ENCODE measurements at regions of chr14 and their contacts with region 1.

Region 1: GRCh38 chr14:36647824-36648753 is 13.6 kb upstream of the PAX9 start:
- DNase-seq: peak; percentile 47 to 69
- ATAC-seq: peak; percentile 95 to 98
- H3K4me3 ChIP-seq: peak overlapping the region; percentile 51
- H3K27ac ChIP-seq: peak overlapping the region; percentile 60 to 81
- H3K4me1 ChIP-seq: peaks cover 5% of the 10 kb centered on the region; the same call in 2 of the 3 replicates
- CTCF ChIP-seq: peak; percentile 73
- EP300 ChIP-seq: no peak
- POLR2A ChIP-seq: no peak
- RAD21 ChIP-seq: peak; percentile 76 to 85

Region 2: DNA sequence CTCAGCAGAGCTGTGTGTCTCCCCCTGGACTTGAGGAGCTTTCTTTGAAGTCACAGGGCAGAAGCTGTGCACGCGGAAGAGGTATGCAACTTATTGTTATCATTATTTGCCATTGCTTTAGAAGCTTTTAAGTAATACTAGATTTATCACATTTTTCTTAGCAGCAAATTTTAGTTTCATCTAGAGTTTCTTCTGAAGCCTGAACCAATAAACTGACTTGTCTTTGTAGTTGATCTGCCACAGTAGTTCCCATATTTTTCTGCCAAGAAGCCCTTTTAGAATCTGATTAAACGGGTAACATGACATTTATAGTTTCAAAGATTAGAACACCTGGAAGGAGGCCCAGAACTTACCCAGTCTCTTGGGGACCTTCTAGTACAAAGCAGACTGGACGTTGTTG is 13.8 kb before region 1 on chr14:
- CTCF ChIA-PET with region 1: interaction called, 13 read pairs
- POLR2A ChIA-PET with region 1: no interaction called
- DNase-seq: no peak
- ATAC-seq: no peak
- H3K4me3 ChIP-seq: no peak overlapping the region
- H3K27ac ChIP-seq: no peak overlapping the region
- H3K4me1 ChIP-seq: no peaks in the 10 kb centered on the region
- CTCF ChIP-seq: no peak
- EP300 ChIP-seq: no peak
- POLR2A ChIP-seq: no peak
- RAD21 ChIP-seq: no peak

Region 3: GRCh38 chr14:36747411-36748184 is 99.5 kb after region 1 on chr14:
- CTCF ChIA-PET with region 1: interaction called, 13 read pairs
- POLR2A ChIA-PET with region 1: no interaction called
- DNase-seq: peak; percentile 17 to 32
- ATAC-seq: peak in 1 of 2 experiments; percentile 75; a peak in 4 of 6 replicates
- H3K4me3 ChIP-seq: no peak overlapping the region
- H3K27ac ChIP-seq: no peak overlapping the region
- H3K4me1 ChIP-seq: no peaks in the 10 kb centered on the region
- CTCF ChIP-seq: peak; percentile 57
- EP300 ChIP-seq: no peak
- POLR2A ChIP-seq: no peak
- RAD21 ChIP-seq: peak in 1 of 2 experiments; percentile 26; a peak in 3 of 5 replicates

Region 4: DNA sequence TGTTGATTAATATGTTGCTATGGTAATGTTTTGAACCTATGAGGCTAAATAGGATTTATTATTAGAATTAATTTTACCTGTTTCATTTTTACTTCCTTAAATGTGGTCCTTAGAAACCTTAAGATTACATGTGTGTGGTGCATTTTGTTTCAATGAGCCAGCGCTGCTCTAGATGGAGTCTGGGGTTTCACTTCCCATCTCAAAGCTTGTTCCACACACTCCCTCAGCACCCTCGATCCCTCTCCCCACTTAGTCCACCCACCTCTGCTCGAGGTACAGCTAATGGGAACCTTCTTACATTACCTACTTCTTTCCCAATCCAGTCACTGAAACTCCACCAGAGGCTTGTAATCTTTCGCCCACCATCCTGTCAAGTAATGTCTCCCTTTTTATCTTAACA is 218.8 kb after region 1 on chr14:
- CTCF ChIA-PET with region 1: no interaction called
- POLR2A ChIA-PET with region 1: no interaction called
- DNase-seq: no peak
- ATAC-seq: no peak
- H3K4me3 ChIP-seq: no peak overlapping the region
- H3K27ac ChIP-seq: no peak overlapping the region
- H3K4me1 ChIP-seq: no peaks in the 10 kb centered on the region
- CTCF ChIP-seq: no peak
- EP300 ChIP-seq: no peak
- POLR2A ChIP-seq: no peak
- RAD21 ChIP-seq: no peak

Region 5: GRCh38 chr14:37116933-37117849 is 469.1 kb after region 1 on chr14:
- CTCF ChIA-PET with region 1: interaction called, 43 read pairs
- POLR2A ChIA-PET with region 1: no interaction called
- DNase-seq: peak; percentile 40 to 74
- ATAC-seq: peak; percentile 71 to 84
- H3K4me3 ChIP-seq: no peak overlapping the region; the same call in 2 of the 3 replicates
- H3K27ac ChIP-seq: peak overlapping the region; percentile 20 to 42; a peak in 1 of 6 replicates
- H3K4me1 ChIP-seq: peaks cover 21% of the 10 kb centered on the region; the same call in 2 of the 3 replicates
- CTCF ChIP-seq: peak; percentile 65
- EP300 ChIP-seq: no peak
- POLR2A ChIP-seq: no peak
- RAD21 ChIP-seq: peak; percentile 76 to 81

Region 6: GRCh38 chr14:37145395-37145794 is 497.3 kb after region 1 on chr14:
- CTCF ChIA-PET with region 1: interaction called, 130 read pairs
- POLR2A ChIA-PET with region 1: no interaction called
- DNase-seq: no peak
- ATAC-seq: no peak
- H3K4me3 ChIP-seq: no peak overlapping the region
- H3K27ac ChIP-seq: no peak overlapping the region
- H3K4me1 ChIP-seq: no peaks in the 10 kb centered on the region
- CTCF ChIP-seq: no peak
- EP300 ChIP-seq: no peak
- POLR2A ChIP-seq: no peak
- RAD21 ChIP-seq: no peak

Measured in A549 (cell line).